Activated T-helper 1 cell treated with anti-CD3 and anti-CD28 coated beads, Interleukin-12 subunit alpha, Interleukin-12 subunit beta, Interleukin-2, Interleukin-4 antibody, amounts not matched to agents 30 ng/mL and 10 ng/mL and 1 ng/mL, durations not matched to agents 14 hours and 24 hours and 36 hours (primary cell): ENCODE measurements at regions of chr2 and their contacts with region 1.

Region 1: GRCh38 chr2:174341286-174341994 is 6.7 kb downstream of the SP9 start:
- DNase-seq: peak; percentile 83
- H3K4me3 Mint-ChIP-seq: peak overlapping the region; percentile 70
- H3K27ac Mint-ChIP-seq: peak overlapping the region; percentile 89
- H3K4me1 Mint-ChIP-seq: peaks cover 33% of the 10 kb centered on the region
- H3K27me3 Mint-ChIP-seq: peaks cover 62% of the 10 kb centered on the region

Region 2: DNA sequence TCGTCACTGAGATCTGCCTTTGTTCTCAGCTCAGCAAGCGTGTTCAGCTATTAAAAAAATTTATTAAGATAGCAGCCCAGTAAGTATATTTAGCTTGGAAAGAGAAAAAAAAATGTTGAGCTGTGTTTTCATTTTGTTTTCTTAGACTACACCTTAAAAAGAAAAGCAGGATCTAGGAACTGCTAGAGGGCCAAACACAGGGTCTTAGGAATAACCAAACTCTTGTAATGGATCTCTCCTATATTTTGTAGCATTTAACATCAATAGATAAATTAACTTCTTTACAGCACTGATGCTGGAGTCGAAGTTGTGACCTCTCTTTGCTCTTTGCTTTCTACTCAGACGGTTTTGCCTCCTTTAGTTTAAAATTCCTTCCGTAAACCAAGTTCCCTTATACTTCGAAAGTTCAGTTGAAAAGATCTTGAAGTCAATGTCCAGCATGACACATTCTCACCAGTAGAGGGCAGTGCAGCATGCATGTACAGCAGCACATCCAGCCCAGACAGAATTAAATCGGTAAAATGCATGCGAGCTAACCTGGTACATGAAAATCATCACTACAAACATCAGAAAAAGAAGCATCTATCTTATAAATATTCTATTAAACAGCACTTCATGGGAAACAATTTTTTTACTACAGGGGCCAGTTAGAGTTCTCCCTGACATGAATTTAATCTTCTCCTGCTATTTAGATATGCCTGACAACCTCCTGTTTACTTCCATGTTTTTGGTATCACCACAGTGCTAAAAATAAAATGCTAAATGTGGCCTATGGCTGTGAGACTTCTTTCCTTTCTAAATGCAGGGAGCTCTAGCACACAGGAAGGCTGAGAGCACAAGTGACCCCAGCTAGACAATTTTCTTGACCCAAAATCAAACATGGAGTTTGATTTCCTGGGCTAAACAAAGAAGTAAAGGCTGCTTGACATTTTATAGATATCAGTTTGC is 1314.0 kb before region 1 on chr2:
- intact Hi-C with region 1: loop called (anchors 1 kb)
- DNase-seq: peak; percentile 57
- H3K4me3 Mint-ChIP-seq: no peak overlapping the region
- H3K27ac Mint-ChIP-seq: no peak overlapping the region
- H3K4me1 Mint-ChIP-seq: no peaks in the 10 kb centered on the region
- H3K27me3 Mint-ChIP-seq: peaks cover 11% of the 10 kb centered on the region

Region 3: GRCh38 chr2:173402405-173402974 is 939.0 kb before region 1 on chr2:
- intact Hi-C with region 1: loop called (anchors 1 kb)
- DNase-seq: peak; percentile 60
- H3K4me3 Mint-ChIP-seq: no peak overlapping the region
- H3K27ac Mint-ChIP-seq: no peak overlapping the region
- H3K4me1 Mint-ChIP-seq: peaks cover 10% of the 10 kb centered on the region
- H3K27me3 Mint-ChIP-seq: peaks cover 68% of the 10 kb centered on the region

Region 4: DNA sequence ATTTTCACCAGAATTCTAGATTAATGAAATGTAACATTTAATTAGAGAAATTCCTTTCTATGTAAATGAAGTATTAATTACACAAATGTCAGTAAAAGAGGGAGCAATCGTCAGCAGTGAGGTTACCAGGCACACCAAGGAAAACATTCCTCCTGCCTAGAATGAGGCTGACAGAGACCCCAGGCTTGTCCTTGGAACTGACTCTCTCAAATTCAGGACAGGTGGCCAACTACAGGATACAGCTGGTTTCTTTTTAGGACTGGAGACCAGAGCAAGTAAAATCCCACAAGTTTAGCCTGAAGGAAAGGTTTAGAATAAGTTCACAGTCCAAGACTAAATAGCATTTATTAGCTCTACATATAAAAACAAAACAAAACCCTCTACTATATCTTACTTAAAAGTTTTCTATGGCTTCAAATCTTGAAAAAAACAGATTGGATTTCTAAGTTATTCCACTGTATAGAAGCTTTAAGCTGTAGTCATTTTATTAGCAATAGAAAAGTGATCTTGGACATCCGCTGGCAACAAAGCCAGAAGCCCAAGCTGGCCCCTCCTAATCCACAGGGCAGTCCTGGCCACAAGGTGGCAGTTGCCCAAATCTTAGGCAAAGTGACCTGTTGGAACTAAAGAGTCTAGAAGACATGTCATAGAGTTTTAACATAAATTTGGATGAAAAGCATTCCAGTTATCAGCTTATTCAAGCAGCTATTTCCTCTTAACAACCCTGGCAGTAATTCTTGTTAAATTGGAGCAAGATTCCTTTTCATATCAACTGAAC is 457.2 kb before region 1 on chr2:
- intact Hi-C with region 1: loop called (anchors 10 kb)
- DNase-seq: no peak
- H3K4me3 Mint-ChIP-seq: no peak overlapping the region
- H3K27ac Mint-ChIP-seq: no peak overlapping the region
- H3K4me1 Mint-ChIP-seq: no peaks in the 10 kb centered on the region
- H3K27me3 Mint-ChIP-seq: peaks cover 13% of the 10 kb centered on the region

Region 5: DNA sequence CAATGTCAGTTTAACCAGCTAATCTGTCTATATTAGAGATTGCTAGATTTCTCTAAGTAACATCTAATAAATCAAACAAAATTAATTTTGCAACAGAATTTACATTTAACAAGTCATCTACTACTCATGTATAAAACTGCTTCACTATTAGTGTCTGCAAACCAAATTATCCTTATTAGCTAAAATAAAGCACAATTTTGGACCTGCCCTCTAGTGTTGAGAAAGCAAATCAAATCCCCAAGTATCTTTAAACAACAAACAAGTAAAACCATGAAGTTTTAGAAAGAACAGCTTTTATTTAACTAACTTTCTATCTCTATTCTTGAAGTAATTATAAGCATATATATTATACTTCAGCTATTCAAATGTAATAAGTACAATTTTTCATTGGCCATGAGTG is 263.2 kb before region 1 on chr2:
- intact Hi-C with region 1: no loop called
- DNase-seq: no peak
- H3K4me3 Mint-ChIP-seq: no peak overlapping the region
- H3K27ac Mint-ChIP-seq: no peak overlapping the region
- H3K4me1 Mint-ChIP-seq: no peaks in the 10 kb centered on the region
- H3K27me3 Mint-ChIP-seq: no peaks in the 10 kb centered on the region

Region 6: DNA sequence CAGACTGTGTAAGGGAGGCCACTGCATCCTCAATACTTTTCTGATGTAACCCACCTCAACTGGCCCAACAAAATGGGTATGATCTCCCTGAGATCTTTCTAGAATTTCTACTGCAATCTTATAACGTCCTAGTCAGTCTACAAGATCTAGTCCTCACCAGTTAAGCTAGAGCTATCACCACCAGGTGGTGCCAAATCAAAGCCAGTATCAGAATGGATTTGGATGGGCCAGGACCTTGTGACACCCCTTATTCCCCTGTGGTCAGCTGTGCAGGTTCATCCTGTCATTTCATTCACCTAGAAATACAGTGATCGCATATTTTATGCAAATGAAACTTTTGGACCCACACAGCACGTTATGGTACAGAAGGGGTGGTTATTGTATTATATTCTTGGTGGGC is 183.4 kb before region 1 on chr2:
- intact Hi-C with region 1: loop called (anchors 2 kb)
- DNase-seq: no peak
- H3K4me3 Mint-ChIP-seq: no peak overlapping the region
- H3K27ac Mint-ChIP-seq: no peak overlapping the region
- H3K4me1 Mint-ChIP-seq: peaks cover 17% of the 10 kb centered on the region
- H3K27me3 Mint-ChIP-seq: no peaks in the 10 kb centered on the region

Region 7: GRCh38 chr2:176096986-176097819 is 1755.8 kb after region 1 on chr2:
- intact Hi-C with region 1: loop called (anchors 5 kb)
- DNase-seq: peak; percentile 31
- H3K4me3 Mint-ChIP-seq: peak overlapping the region; percentile 78
- H3K27ac Mint-ChIP-seq: peak overlapping the region; percentile 25
- H3K4me1 Mint-ChIP-seq: peaks cover 14% of the 10 kb centered on the region
- H3K27me3 Mint-ChIP-seq: peaks cover 83% of the 10 kb centered on the region